Sigmoid colon (tissue), 7 donors: ENCODE measurements at regions of chr9 and their contacts with region 1.

Region 1: DNA sequence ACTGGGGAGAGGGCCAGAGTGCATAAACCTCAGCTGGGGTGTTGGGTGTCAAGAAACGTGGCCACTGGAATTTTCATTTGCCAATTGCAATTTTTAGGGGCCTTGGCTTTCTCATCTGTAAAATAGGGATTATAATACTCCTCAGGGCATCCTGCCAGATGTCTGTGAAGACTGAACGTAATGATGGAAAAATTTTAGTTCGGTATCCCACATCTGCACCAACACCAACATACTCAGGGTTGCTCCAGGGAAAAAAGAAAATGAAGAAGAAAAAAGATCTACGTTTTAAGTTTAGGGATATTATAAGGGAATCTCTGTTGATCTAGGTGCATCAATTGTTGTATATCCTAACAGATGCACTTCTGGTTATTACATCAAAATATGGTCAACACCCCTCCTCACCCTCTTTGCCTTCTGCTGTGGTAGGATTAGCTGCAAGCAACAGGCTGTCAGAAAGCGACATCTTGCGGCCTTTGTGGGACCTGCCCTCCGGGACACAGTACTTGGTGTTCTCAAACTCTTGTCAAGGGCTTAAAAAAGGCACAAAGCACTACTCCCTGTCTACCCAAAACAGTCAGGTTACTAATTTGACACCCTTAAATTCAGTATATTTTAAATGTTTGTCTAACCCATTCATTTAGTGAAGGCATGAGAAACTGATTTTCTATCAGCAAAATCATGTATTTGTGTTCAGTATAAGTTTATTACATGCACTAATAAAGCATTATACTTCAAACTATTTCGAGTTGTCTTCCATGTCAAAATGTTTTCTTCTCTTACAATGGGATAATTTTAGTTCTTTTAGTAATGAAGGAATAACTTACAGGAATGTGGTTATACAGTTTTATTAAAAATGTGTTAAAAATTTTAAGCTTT is 8.3 kb upstream of the TBC1D2 start:
- DNase-seq: peak; percentile 87
- H3K4me3 ChIP-seq: no peak overlapping the region
- H3K27ac ChIP-seq: no peak overlapping the region
- H3K4me1 ChIP-seq: no peaks in the 10 kb centered on the region
- H3K27me3 ChIP-seq: peaks cover 0 to 3% (median 0%) of the 10 kb centered on the region in 3 donors
- CTCF ChIP-seq: peak; percentile 70 to 84 (median 76)
- EP300 ChIP-seq: no peak
- POLR2A ChIP-seq: no peak

Region 2: DNA sequence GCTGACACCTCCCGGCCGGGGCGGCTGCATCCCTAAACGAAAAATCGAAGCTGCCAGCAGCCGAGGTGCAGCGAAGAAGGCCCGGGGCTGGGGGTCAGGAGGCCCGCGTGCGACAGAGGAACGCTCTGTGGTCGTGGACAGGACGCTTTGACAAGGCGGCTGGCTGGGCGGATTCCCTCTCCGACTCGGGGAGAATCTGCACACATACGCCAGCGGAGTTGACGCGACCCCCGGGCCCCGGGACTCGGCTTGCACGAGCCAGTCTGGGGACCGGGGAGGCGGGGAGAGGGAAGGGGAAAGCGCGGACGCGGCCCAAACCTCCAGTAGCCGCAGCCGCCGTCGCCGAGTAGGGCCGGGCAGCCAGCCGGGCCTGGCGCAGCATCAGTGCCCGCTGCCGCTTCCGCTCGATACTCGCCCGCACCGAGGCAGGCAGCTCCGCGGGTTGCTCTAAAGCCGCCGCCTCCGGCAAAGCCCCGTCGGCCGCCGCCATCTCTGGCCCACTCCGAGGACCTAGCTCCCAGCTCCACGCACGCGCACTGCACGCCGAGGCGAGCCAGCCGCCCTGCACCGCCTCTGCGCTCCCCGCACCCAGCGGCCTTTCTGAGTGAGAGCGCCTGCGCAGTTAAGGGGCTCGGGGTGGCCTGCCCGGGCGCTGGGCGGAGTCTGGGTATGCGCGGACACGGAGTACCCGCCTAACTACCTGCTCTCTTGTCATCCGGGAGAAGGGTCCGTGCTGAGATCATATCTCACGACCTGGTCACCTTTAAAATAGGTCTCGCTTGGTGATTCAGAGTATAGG is 566.7 kb before region 1 on chr9 and contains the start of gene XPA:
- intact Hi-C with region 1: loop called (anchors 10 kb)
- DNase-seq: peak; percentile 98
- H3K4me3 ChIP-seq: peak within 1 kb of the TSS; percentile 65 to 99 (median 68)
- H3K27ac ChIP-seq: peak within 1 kb of the TSS; percentile 87 to 97 (median 92)
- H3K4me1 ChIP-seq: peaks cover 0 to 36% (median 31%) of the 10 kb centered on the region in 4 donors
- H3K27me3 ChIP-seq: no peaks in the 10 kb centered on the region
- CTCF ChIP-seq: no peak
- EP300 ChIP-seq: no peak
- POLR2A ChIP-seq: peak; percentile 80 to 85
- total RNA-seq, gene XPA: 21.7 to 33.2 (median 31.2) TPM

Region 3: GRCh38 chr9:98074115-98074990 is 189.4 kb before region 1 on chr9:
- intact Hi-C with region 1: loop called (anchors 2 kb)
- DNase-seq: no peak
- H3K4me3 ChIP-seq: no peak overlapping the region
- H3K27ac ChIP-seq: peak overlapping the region in 2 of 4 donors; percentile 18 to 28
- H3K4me1 ChIP-seq: peaks cover 0 to 11% (median 7%) of the 10 kb centered on the region in 4 donors
- H3K27me3 ChIP-seq: no peaks in the 10 kb centered on the region
- CTCF ChIP-seq: peak in 3 of 4 experiments; percentile 72 to 92 (median 77)
- EP300 ChIP-seq: no peak
- POLR2A ChIP-seq: no peak

Region 4: DNA sequence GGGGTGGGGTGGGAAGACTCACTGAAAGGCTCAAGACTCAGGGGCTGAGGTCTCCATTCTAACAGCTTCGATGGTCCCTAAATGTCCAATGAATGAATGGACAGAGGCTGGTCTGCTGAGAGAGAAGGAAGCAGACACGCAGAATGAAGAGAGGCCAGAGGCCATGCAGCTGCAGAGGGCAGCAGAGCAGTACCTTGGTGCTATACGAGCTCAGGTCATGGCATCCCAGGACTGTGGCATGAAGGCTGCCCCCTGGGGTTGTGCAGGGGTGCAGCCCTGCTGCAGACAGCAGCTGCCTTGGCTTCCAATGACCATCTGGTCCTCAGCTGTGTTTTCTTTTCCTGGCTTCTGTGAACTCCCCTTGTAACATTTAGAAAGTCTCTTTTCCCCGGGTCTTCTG is 56.1 kb before region 1 on chr9:
- intact Hi-C with region 1: loop called (anchors 1 kb)
- DNase-seq: no peak
- H3K4me3 ChIP-seq: no peak overlapping the region
- H3K27ac ChIP-seq: no peak overlapping the region
- H3K4me1 ChIP-seq: peaks cover 0 to 4% (median 0%) of the 10 kb centered on the region in 4 donors
- H3K27me3 ChIP-seq: no peaks in the 10 kb centered on the region
- CTCF ChIP-seq: no peak
- EP300 ChIP-seq: no peak
- POLR2A ChIP-seq: no peak